Heart right ventricle (tissue), 16 donors: ENCODE measurements at regions of chr13 and their contacts with region 1.

Region 1: DNA sequence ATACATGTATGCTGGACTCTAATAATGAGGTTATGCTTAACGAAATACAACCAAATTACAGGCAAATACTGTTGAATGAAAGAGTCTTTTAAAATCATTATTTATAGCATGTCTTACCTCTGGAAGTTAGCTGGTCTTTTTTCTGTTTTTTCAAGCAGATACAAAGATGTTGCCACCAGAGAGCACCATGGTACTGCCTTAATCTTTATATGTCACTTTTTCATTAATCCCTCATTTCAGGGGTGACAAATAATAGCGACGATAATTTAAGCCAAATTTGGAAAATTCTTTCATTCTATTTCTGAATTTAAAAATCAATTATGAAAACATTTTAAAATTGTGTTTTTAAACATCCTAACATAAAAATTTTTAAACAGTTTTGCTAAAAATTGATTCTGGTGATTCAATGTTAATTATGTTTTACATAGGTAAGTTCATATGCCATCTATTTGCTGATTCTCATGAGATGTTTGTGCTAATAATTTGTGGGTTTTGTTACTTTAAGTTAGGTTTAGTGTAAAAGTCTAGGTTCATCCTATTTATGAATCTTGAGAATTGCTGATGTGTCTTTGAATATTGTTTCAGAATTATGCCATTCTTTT is 379.3 kb upstream of the SGCG start:
- DNase-seq: no peak
- ATAC-seq: peak in 3 of 8 donors; percentile 19 to 44 (median 31)
- H3K4me3 ChIP-seq: no peak overlapping the region
- H3K27ac ChIP-seq: no peak overlapping the region
- H3K4me1 ChIP-seq: no peaks in the 10 kb centered on the region
- H3K27me3 ChIP-seq: peaks cover 0 to 11% (median 8%) of the 10 kb centered on the region in 7 donors
- CTCF ChIP-seq: peak in 7 of 9 donors; percentile 31 to 53 (median 41)

Region 2: GRCh38 chr13:21435710-21436151 is 1365.8 kb before region 1 on chr13:
- intact Hi-C with region 1: no loop called
- DNase-seq: peak; percentile 45 to 70
- ATAC-seq: peak; percentile 84 to 100 (median 99)
- H3K4me3 ChIP-seq: peak overlapping the region in 3 of 10 donors; percentile 4 to 30 (median 18)
- H3K27ac ChIP-seq: peak overlapping the region; percentile 42 to 87 (median 75)
- H3K4me1 ChIP-seq: peaks cover 0 to 57% (median 20%) of the 10 kb centered on the region in 9 donors
- H3K27me3 ChIP-seq: no peaks in the 10 kb centered on the region
- CTCF ChIP-seq: no peak

Region 3: GRCh38 chr13:23020223-23020843 is 218.8 kb after region 1 on chr13:
- intact Hi-C with region 1: loop called in 9 of 10 experiments (anchors 2 to 10 kb)
- DNase-seq: peak in 1 of 2 donors; percentile 24
- ATAC-seq: peak in 3 of 8 donors; percentile 46 to 75 (median 52)
- H3K4me3 ChIP-seq: no peak overlapping the region
- H3K27ac ChIP-seq: no peak overlapping the region
- H3K4me1 ChIP-seq: no peaks in the 10 kb centered on the region
- H3K27me3 ChIP-seq: peaks cover 0 to 4% (median 0%) of the 10 kb centered on the region in 7 donors
- CTCF ChIP-seq: peak; percentile 48 to 87 (median 78)

Region 4: DNA sequence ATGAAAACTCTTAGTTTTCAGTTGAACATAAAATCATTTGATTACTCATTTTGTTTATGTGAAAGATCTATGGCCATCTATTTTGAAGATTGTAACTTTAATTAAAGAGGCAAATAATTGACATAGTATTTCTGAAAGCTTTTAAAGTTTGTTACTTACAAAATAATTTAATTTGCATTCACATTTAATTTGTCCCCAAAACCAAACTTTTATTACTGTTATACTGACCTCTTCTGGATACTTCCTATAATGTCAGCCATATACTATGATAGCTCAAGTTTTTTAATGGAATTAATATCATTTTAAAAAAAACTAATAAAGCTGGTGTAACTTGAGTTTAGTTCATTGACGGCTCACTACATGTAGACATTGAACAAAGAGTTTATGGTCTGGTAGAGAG is 374.4 kb after region 1 on chr13:
- intact Hi-C with region 1: loop called in 1 of 10 experiments (anchors 10 kb)
- DNase-seq: no peak
- ATAC-seq: no peak
- H3K4me3 ChIP-seq: no peak overlapping the region
- H3K27ac ChIP-seq: no peak overlapping the region
- H3K4me1 ChIP-seq: no peaks in the 10 kb centered on the region
- H3K27me3 ChIP-seq: no peaks in the 10 kb centered on the region
- CTCF ChIP-seq: peak in 7 of 9 donors; percentile 13 to 38 (median 25)